B cell (primary cell): ENCODE measurements at regions of chr1 and their contacts with region 1.

Region 1: DNA sequence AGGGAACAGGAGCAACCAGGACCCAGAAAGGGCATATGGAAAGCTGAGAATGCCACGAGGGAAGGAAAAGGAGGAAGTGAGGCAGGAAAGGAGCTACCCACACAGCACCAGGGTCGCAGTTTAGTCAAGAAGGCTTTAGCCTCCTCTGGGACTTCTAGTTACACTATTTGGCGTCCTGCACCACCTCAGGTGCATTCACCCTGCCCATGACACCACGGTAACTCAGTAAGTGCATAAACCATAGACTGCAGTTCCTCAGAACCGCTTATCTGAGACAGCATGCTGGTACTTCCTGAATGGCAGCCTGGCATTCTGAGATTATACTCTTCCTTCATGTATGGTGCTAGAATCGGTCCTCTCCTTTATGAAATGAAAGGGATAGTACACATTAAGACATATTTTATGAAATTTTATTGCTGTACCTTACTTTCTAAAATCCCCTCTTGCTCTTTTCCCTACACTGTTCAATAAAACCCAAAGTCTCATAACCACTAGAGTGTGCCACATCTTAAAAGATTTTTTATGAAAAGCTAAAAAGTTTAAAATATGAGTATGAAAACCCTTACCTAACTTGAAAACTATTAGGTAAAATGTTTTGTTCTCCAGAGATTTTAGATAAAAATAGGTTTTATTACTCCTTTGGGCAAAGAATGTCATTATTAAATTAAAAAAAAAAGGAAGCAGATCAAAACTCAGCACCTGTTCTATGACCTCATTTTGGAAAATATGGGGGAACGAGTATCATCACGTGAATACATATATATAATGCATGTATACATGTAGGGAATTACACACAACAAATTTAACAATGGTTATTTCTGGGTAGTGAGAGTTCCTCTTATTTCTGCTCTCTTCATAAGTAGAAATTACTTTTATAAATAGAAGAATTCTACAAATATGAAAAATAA is 67.3 kb downstream of the VAV3 start:
- DNase-seq: peak; percentile 86
- ATAC-seq: peak; percentile 81
- H3K4me3 ChIP-seq: peak overlapping the region in 3 of 5 experiments; percentile 12 to 16 (median 13)
- H3K4me3 Mint-ChIP-seq: peak overlapping the region; percentile 56
- H3K27ac ChIP-seq: peak overlapping the region; percentile 82 to 93
- H3K27ac Mint-ChIP-seq: peak overlapping the region; percentile 94
- H3K4me1 ChIP-seq: peaks cover 83 to 87% of the 10 kb centered on the region in 2 donors
- H3K4me1 Mint-ChIP-seq: peaks cover 79% of the 10 kb centered on the region
- H3K27me3 ChIP-seq: no peaks in the 10 kb centered on the region
- H3K27me3 Mint-ChIP-seq: no peaks in the 10 kb centered on the region
- CTCF ChIP-seq: no peak

Region 2: GRCh38 chr1:107840725-107841124 is 57.0 kb before region 1 on chr1:
- CTCF ChIA-PET with region 1: no interaction called
- POLR2A ChIA-PET with region 1: no interaction called
- intact Hi-C with region 1: loop called (anchors 5 kb)
- DNase-seq: peak; percentile 50
- ATAC-seq: peak; percentile 50
- H3K4me3 ChIP-seq: peak overlapping the region in 2 of 5 experiments; percentile 22 to 45
- H3K4me3 Mint-ChIP-seq: peak overlapping the region; percentile 76
- H3K27ac ChIP-seq: peak overlapping the region; percentile 43 to 64
- H3K27ac Mint-ChIP-seq: peak overlapping the region; percentile 85
- H3K4me1 ChIP-seq: peaks cover 78 to 93% of the 10 kb centered on the region in 2 donors
- H3K4me1 Mint-ChIP-seq: peaks cover 92% of the 10 kb centered on the region
- H3K27me3 ChIP-seq: no peaks in the 10 kb centered on the region
- H3K27me3 Mint-ChIP-seq: no peaks in the 10 kb centered on the region
- CTCF ChIP-seq: no peak

Region 3: GRCh38 chr1:107877092-107877491 is 20.6 kb before region 1 on chr1:
- CTCF ChIA-PET with region 1: no interaction called
- POLR2A ChIA-PET with region 1: interaction called, 3 read pairs
- intact Hi-C with region 1: loop called (anchors 2 kb)
- DNase-seq: no peak
- ATAC-seq: peak; percentile 53
- H3K4me3 ChIP-seq: peak overlapping the region in 1 of 5 experiments; percentile 17
- H3K4me3 Mint-ChIP-seq: peak overlapping the region; percentile 56
- H3K27ac ChIP-seq: no peak overlapping the region
- H3K27ac Mint-ChIP-seq: no peak overlapping the region
- H3K4me1 ChIP-seq: peaks cover 47 to 61% of the 10 kb centered on the region in 2 donors
- H3K4me1 Mint-ChIP-seq: peaks cover 77% of the 10 kb centered on the region
- H3K27me3 ChIP-seq: no peaks in the 10 kb centered on the region
- H3K27me3 Mint-ChIP-seq: no peaks in the 10 kb centered on the region
- CTCF ChIP-seq: no peak

Region 4: DNA sequence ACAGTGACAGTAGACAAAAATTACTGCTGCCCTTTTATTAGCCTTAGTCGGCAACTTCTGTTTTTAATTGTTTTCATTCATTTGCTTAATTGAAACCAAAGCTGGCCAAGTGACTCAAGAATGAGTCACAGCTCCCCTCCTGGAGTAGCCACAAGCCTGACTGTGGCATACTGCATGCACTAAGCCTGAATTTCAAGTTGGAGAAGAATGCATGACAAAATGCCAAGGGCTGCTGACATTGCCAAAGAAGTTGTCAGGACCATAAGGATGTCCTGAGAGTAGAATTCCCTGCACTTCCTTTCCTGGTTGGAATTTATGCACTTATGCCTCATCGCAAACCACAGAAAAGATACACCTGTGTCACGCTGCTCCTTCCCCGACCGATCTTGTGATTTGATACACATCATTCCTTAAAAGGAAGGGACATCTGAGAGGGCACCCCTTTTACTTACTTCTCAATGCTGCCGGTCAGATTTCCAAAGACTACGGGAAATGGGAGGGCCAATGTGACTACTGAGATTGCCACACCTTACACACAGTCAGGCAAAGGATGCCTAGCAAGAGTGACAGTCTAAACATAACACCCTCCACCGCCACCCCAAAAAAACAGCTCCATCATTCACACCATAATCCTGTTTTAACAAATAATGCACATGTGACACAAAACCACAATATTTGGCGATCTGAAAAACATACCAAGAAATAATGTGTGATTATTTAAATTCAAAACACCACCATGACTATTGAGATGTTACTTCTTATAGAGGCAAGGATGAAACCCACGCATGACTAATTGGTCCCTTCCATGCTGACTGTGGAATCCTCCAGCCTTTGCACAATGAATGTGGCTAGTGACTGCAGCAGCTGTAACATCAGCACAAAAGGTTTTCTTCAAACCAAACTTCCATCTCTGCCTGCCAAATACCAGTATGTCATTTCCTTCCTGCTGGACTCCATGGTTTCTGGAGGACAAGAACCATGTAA is 39.1 kb after region 1 on chr1:
- CTCF ChIA-PET with region 1: no interaction called
- POLR2A ChIA-PET with region 1: no interaction called
- intact Hi-C with region 1: loop called (anchors 1 kb)
- DNase-seq: peak; percentile 42
- ATAC-seq: peak; percentile 54
- H3K4me3 ChIP-seq: no peak overlapping the region
- H3K4me3 Mint-ChIP-seq: peak overlapping the region; percentile 69
- H3K27ac ChIP-seq: peak overlapping the region in 1 of 2 donors; percentile 3
- H3K27ac Mint-ChIP-seq: peak overlapping the region; percentile 78
- H3K4me1 ChIP-seq: peaks cover 50 to 56% of the 10 kb centered on the region in 2 donors
- H3K4me1 Mint-ChIP-seq: peaks cover 81% of the 10 kb centered on the region
- H3K27me3 ChIP-seq: no peaks in the 10 kb centered on the region
- H3K27me3 Mint-ChIP-seq: no peaks in the 10 kb centered on the region
- CTCF ChIP-seq: no peak

Region 5: DNA sequence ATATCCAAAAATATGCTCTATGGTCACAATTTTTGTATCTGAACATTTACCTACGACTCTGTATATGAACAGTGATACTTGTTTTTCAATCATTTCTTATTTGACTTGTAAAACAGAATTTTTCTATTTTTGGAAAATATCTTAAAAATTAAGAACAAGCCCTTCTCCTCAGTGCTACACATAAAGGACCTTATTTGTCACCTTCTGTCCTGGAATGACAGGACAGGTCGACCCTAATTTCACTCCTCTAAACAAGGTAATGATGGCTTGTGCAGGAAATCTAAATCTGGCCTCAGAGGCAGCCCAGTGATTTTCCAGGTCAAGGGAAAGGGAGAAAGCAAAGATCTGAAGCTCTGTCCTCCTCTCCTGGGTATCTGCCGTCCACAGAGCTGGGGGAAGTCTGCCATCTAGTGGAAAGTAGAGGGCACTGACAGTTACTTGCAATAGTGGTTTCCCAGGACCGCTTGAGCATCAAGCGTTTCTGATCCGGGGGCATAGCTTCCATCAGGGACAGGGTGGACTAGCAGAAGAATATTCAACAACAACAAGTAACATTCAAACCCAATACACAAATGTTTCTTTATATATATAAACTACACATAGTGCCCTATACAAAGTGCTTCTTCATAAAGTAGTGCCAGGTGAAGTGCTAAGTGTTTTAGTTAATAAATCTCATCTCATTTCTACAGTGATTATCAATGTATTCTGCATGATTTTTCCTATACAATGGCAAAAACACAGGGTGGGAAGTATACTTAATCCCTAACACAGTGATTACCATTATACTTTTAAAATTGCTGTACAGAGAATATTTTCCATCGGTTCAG is 227.8 kb after region 1 on chr1:
- CTCF ChIA-PET with region 1: interaction called, 3 read pairs
- POLR2A ChIA-PET with region 1: no interaction called
- intact Hi-C with region 1: loop called (anchors 5 kb)
- DNase-seq: peak; percentile 85
- ATAC-seq: peak; percentile 92
- H3K4me3 ChIP-seq: no peak overlapping the region
- H3K4me3 Mint-ChIP-seq: no peak overlapping the region
- H3K27ac ChIP-seq: no peak overlapping the region
- H3K27ac Mint-ChIP-seq: no peak overlapping the region
- H3K4me1 ChIP-seq: peaks cover 5 to 8% of the 10 kb centered on the region in 2 donors
- H3K4me1 Mint-ChIP-seq: peaks cover 4% of the 10 kb centered on the region
- H3K27me3 ChIP-seq: no peaks in the 10 kb centered on the region
- H3K27me3 Mint-ChIP-seq: peaks cover under 1% of the 10 kb centered on the region
- CTCF ChIP-seq: peak; percentile 96